Posterior vena cava (tissue), 2 donors: ENCODE measurements at regions of chr10 and their contacts with region 1.

Region 1: DNA sequence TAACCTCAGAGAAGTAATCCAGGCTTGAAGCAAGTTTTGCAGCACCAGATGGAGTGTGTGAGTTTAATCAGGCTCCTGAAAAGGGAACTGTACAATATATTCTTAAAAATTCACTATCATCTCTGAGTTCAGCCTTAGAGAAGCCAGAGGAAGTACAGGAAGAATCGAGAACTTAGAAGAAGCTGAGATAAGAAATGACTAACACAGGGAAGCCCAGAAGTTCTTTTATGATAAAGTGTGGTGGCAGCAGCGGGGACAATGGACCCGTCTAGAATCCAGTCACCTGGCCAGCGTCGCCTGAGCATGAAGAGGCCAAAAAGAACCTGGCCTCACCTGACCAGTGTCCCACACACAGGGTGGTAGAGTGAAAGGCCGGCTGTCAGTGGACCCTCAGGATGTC is 161.0 kb downstream of the USP6NL start:
- DNase-seq: no peak

Region 2: DNA sequence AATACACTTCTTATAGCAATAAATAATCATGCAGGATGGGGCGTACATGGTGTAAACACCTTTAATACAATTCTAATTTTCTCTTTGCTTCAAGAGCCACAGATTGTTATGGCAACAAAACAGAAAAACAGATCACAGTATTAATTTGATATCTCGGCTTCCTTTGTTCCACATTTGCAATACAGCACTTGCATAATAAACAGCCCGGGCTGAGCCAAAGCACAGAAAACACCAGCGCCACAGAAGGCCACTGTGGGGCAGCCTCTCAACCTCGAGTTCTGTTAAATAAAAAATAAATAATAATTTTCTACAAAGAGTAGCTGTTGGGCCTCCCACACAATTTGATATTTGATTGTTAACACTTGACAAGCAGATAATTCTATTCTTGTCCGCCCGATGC is 94.8 kb before region 1 on chr10:
- intact Hi-C with region 1: no loop called
- DNase-seq: no peak

Region 3: GRCh38 chr10:11424456-11425297 is 25.8 kb before region 1 on chr10:
- intact Hi-C with region 1: loop called in 1 of 2 experiments (anchors 1 kb)
- DNase-seq: peak; percentile 76